ENCODE measurements at regions of chrX and their contacts with region 1.

Region 1: DNA sequence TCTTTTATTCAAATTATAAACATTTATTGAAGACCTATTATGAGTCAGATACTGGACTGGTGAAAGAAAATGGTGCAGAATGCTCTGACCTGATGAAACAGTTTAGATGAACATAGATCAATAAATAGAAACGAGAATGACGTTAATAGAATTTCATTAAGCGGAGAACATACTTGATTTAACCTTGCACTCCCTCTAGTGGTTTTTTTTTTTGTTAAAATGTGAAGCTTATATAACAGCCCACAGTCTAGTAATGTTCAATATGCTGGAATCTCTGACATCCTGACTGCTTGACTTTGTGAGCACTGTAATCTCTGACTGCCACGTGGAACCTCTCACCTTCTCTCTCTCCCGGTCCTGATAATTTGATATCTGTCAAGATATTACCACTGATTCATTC is 32.3 kb downstream of the HDAC8 start:
- DNase-seq: no peak
- ATAC-seq: peak; percentile 49 to 68

Region 2: DNA sequence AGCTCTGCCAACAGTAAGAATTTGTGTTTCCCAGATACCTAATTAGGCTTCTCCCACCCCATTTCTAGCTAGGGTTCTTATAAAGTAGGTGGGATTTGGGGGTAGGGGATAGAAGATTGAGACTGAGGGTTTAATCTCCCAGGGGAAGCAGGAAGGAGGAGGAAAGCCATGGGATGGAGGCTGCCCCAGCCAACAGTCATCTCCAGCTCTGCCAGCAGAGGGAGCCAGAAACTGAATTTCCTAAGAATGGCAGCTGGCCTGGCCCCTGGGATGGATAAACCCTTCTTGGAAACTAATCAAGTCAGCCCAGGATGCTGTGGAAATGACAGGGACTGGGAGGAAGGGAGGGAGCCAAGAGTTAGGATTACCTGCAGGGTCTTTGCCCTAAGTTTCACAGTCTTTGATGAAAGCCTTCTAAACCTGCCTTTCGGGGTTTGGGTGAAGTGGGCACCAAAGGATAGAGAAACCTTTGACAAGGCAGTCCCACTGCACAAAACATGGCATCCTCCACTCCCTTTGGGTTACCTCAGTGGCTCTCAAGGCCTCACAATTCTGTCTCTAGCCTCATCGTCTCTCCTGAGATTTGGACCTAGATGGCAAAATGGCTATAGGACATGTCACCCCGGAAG is 294.7 kb before region 1 on chrX:
- intact Hi-C with region 1: loop called in 1 of 2 experiments (anchors 5 kb)
- DNase-seq: peak; percentile 57
- ATAC-seq: peak; percentile 66 to 72

Region 3: GRCh38 chrX:72276478-72276953 is 263.8 kb before region 1 on chrX:
- intact Hi-C with region 1: no loop called
- DNase-seq: no peak
- ATAC-seq: no peak

Region 4: DNA sequence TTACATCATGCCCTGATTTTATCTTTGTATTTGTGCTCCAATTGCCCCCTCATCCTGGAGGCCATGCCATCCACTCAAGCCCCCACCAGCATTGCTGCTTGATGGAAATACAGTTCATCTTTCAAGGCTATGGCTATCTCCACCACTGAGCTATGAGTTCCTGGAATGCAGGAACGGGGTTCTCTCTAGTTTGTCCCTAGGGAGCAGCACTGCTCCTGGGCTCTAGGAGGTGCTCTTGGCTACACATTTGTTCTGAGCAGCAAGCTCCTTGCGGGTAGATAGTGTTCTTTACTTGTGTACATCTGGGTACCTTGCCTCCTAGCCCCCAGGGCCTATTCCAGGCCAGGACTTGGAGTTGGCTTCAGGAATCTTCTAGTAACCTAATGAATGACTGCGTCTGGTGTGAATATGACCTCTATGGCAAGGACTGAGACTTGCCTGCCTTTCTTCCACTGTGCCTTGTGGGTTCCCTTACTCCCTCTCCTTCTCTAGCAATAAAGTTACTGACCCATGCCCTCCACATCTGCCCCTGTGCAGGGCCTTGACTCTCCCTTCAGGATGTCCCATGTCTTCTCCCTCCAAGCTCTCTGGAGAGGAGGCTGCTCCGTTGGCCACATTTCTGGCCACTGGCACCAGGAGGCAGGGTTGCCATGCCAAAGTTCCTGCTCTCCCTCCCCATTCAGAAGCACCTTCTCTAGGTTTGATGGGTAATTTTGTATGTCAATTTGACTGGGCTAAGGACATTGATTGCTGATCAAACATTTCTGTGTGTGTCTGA is 242.2 kb before region 1 on chrX:
- intact Hi-C with region 1: loop called in 1 of 2 experiments (anchors 5 kb)
- DNase-seq: no peak
- ATAC-seq: no peak

Region 5: DNA sequence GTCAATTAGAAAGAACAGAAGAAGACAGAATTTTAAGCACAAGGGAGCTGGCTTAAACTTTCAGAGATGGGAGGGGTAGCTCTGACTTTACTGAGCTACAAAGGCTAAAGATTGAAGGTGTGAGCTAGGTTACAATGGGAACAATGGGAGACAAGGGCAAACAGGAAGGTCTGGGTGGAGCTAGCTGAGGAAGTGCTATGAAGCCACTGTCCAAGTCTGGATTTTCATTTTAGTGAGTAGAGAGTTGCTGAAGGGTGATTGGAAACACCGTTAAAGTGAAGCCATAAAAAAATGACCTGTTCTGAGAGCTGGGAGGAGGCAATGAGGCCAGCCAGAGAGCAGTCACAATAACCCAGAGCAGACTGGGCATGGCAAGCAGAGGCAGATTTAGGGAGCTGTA is 130.3 kb before region 1 on chrX:
- intact Hi-C with region 1: no loop called
- DNase-seq: no peak
- ATAC-seq: no peak

Region 6: GRCh38 chrX:73028876-73029275 is 488.6 kb after region 1 on chrX:
- intact Hi-C with region 1: no loop called
- DNase-seq: no peak
- ATAC-seq: no peak